ENCODE measurements at regions of chr22 and their contacts with region 1.

Region 1: DNA sequence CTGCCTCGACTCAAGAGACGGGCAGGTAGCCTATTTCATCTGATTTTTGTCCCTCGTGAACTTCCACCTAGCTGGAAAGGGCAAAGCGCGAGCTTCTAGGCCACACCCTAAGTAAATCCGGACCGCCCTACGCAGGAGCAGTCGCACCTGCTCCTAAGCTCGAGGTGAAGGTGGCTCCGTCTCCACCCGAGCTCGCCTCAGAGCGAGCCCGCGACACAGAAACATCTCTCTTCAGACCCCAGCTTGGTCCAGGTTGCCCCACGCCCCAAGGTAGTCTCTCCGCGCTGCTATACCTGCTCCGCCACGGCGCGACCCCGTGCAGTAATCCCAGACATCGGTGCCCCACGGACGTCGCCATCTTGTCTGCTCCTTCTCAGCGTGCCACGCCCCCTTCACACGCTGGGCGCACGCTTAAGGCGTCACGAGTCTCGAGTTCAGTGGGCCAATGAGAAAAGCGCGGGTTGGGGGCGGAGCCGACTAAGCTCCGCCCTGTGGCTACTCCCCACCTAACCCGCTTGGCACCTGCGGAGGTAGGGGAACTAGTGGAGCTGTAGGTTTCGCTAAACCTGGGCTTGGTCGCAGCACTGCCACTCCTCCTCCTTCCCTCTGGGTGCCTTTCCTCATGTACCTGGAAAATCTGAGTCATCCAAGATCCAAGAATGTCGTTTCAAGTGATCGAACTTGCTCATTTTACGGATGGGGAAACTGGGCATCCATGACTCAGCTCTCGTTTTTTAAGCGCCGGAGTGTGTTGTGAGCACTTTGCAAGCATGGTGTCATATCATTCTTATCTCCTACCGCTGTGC is at the start of gene PISD:
- DNase-seq: peak; percentile 96
- ATAC-seq: peak; percentile 88
- H3K4me3 ChIP-seq: peak within 1 kb of the TSS; percentile 85 to 89
- H3K27ac ChIP-seq: peak within 1 kb of the TSS; percentile 88
- H3K4me1 ChIP-seq: peaks cover 19 to 51% of the 10 kb centered on the region in 2 experiments
- H3K27me3 ChIP-seq: no peaks in the 10 kb centered on the region
- CTCF ChIP-seq: no peak
- POLR2A ChIP-seq: peak; percentile 83
- RAD21 ChIP-seq: no peak
- total RNA-seq, gene PISD: 47.1 TPM

Region 2: DNA sequence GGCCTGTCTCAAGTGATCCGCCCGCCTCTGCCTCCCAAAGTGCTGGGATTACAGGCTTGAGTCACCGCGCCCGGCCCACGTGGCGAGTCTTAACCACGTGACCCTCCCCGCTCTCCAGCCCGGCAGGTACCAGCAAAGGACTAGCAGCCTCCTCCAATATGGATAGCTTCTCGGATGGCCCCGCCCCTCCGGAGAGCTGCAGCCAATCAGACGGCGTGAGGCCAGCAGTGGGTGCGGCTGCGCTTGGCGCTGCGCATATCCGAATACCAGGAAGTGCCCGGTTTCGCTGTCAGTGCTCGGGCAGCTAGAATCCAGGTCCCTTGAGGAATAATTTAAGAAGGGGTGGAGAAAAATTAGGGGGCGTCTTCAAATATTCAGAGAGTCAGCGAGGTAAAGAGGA is 14.6 kb after region 1 on chr22:
- CTCF ChIA-PET with region 1: interaction called, 15 read pairs
- POLR2A ChIA-PET with region 1: interaction called, 16 read pairs
- RAD21 ChIA-PET with region 1: interaction called in 1 of 2 experiments, 5 read pairs
- intact Hi-C with region 1: no loop called
- DNase-seq: peak; percentile 92
- ATAC-seq: peak; percentile 100
- H3K4me3 ChIP-seq: peak overlapping the region; percentile 23 to 51
- H3K27ac ChIP-seq: peak overlapping the region; percentile 49
- H3K4me1 ChIP-seq: peaks cover 12 to 25% of the 10 kb centered on the region in 2 experiments
- H3K27me3 ChIP-seq: no peaks in the 10 kb centered on the region
- CTCF ChIP-seq: no peak
- POLR2A ChIP-seq: no peak
- RAD21 ChIP-seq: no peak

Region 3: DNA sequence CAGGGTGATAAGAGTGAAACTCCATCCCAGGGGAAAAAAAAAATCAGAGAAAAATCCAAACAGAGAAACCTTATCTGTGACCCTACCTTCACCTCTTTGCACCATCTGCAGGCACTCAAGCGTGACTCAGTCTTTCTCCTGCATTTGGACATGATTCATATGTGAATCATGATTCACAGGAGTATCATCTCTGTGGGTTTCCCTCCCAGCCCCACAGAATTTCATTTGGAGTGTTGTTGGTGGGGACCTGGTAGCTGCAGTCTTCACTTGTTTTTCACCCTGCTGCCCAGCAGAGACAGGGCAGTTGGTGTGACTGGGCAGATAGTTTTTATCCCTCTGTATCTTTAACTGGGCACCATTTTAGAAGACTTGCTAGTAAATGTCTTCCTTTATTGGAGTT is 167.5 kb after region 1 on chr22:
- CTCF ChIA-PET with region 1: interaction called, 3 read pairs
- POLR2A ChIA-PET with region 1: no interaction called
- RAD21 ChIA-PET with region 1: no interaction called
- intact Hi-C with region 1: loop called (anchors 2 kb)
- DNase-seq: peak; percentile 89
- ATAC-seq: peak; percentile 94
- H3K4me3 ChIP-seq: peak overlapping the region in 1 of 2 experiments; percentile 38; a peak in 2 of 4 replicates
- H3K27ac ChIP-seq: peak overlapping the region; percentile 68
- H3K4me1 ChIP-seq: peaks cover 27 to 28% of the 10 kb centered on the region in 2 experiments
- H3K27me3 ChIP-seq: no peaks in the 10 kb centered on the region
- CTCF ChIP-seq: no peak
- POLR2A ChIP-seq: no peak
- RAD21 ChIP-seq: peak; percentile 23

Region 4: GRCh38 chr22:31951194-31952093 is 289.4 kb after region 1 on chr22:
- CTCF ChIA-PET with region 1: interaction called, 16 read pairs
- POLR2A ChIA-PET with region 1: interaction called, 3 read pairs
- RAD21 ChIA-PET with region 1: interaction called in 1 of 2 experiments, 4 read pairs
- intact Hi-C with region 1: loop called (anchors 1 kb)
- DNase-seq: no peak
- ATAC-seq: peak; percentile 26; the same call in 1 of the 2 replicates
- H3K4me3 ChIP-seq: no peak overlapping the region
- H3K27ac ChIP-seq: peak overlapping the region; percentile 10; the same call in 1 of the 2 replicates
- H3K4me1 ChIP-seq: peaks cover 12 to 36% of the 10 kb centered on the region in 2 experiments
- H3K27me3 ChIP-seq: no peaks in the 10 kb centered on the region
- CTCF ChIP-seq: no peak
- POLR2A ChIP-seq: no peak
- RAD21 ChIP-seq: no peak

Region 5: GRCh38 chr22:31970490-31971444 is 308.7 kb after region 1 on chr22:
- CTCF ChIA-PET with region 1: interaction called, 143 read pairs
- POLR2A ChIA-PET with region 1: interaction called, 12 read pairs
- RAD21 ChIA-PET with region 1: interaction called, 12 to 15 read pairs
- intact Hi-C with region 1: loop called (anchors 1 kb)
- DNase-seq: peak; percentile 63
- ATAC-seq: peak; percentile 93
- H3K4me3 ChIP-seq: peak overlapping the region; percentile 51 to 60
- H3K27ac ChIP-seq: no peak overlapping the region; the same call in 1 of the 2 replicates
- H3K4me1 ChIP-seq: peaks cover 2 to 16% of the 10 kb centered on the region in 2 experiments; a peak in 3 of 4 replicates
- H3K27me3 ChIP-seq: no peaks in the 10 kb centered on the region
- CTCF ChIP-seq: peak; percentile 82 to 97 (median 83)
- POLR2A ChIP-seq: no peak
- RAD21 ChIP-seq: peak; percentile 86

Region 6: GRCh38 chr22:32050678-32051515 is 388.8 kb after region 1 on chr22:
- CTCF ChIA-PET with region 1: no interaction called
- POLR2A ChIA-PET with region 1: no interaction called
- RAD21 ChIA-PET with region 1: no interaction called
- intact Hi-C with region 1: loop called (anchors 10 kb)
- DNase-seq: peak; percentile 95
- ATAC-seq: peak; percentile 99
- H3K4me3 ChIP-seq: peak overlapping the region in 1 of 2 experiments; percentile 23; a peak in 2 of 4 replicates
- H3K27ac ChIP-seq: peak overlapping the region; percentile 80
- H3K4me1 ChIP-seq: peaks cover 20 to 32% of the 10 kb centered on the region in 2 experiments
- H3K27me3 ChIP-seq: no peaks in the 10 kb centered on the region
- CTCF ChIP-seq: no peak
- POLR2A ChIP-seq: peak; percentile 55
- RAD21 ChIP-seq: 0 out of 2 replicates have a peak, but pooled peaks have one; percentile 3

Measured in HCT116 (cell line).